Tibial artery (tissue), 4 donors: ENCODE measurements at regions of chr3 and their contacts with region 1.

Region 1: GRCh38 chr3:101809178-101810021 is 30.4 kb downstream of the NXPE3 start:
- DNase-seq: no peak
- H3K4me3 ChIP-seq: no peak overlapping the region
- H3K27ac ChIP-seq: peak overlapping the region in 1 of 2 donors; percentile 2
- H3K4me1 ChIP-seq: peaks cover 0 to 19% (median 8%) of the 10 kb centered on the region in 4 donors
- H3K27me3 ChIP-seq: no peaks in the 10 kb centered on the region
- CTCF ChIP-seq: peak; percentile 55 to 76

Region 2: DNA sequence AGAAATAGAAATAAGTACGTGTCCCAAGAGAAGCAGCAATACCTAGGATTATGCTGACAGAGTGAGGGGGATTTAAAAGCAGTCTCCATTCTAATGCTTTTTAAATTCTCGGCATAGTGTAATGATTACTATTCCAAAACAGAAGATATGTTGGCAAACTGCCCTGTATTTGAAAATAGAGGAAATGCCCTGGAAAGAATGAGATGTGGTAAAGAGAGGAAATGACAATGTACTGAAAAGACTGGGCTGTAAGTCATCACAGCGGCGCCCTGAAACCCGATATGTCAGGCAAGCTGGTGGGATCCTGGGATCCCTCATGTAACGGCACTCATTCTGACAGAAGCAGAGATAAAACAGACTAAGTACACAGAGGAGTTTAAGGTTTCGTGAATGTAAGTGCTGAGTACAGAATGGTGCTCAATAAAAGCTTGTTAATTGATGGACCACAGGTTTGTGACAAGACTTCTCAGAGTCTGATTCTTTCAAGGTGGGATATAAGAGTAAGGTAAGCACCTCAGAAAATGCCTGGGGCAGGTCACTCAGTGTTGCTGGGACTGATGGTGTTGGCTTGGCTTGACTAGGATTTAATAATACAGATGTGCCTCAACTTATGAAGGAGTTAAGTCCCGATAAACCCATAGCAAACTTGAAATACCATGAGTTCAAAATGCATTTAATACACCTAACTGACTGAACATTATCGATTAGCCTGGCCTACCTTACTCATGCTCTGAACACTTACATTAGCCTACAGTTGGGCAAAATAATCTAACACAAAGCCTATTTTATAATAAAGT is 131.3 kb after region 1 on chr3:
- intact Hi-C with region 1: loop called (anchors 5 kb)
- DNase-seq: peak in 1 of 2 donors; percentile 53
- H3K4me3 ChIP-seq: no peak overlapping the region
- H3K27ac ChIP-seq: no peak overlapping the region
- H3K4me1 ChIP-seq: peaks cover 0 to 47% (median 2%) of the 10 kb centered on the region in 4 donors
- H3K27me3 ChIP-seq: no peaks in the 10 kb centered on the region
- CTCF ChIP-seq: no peak

Region 3: DNA sequence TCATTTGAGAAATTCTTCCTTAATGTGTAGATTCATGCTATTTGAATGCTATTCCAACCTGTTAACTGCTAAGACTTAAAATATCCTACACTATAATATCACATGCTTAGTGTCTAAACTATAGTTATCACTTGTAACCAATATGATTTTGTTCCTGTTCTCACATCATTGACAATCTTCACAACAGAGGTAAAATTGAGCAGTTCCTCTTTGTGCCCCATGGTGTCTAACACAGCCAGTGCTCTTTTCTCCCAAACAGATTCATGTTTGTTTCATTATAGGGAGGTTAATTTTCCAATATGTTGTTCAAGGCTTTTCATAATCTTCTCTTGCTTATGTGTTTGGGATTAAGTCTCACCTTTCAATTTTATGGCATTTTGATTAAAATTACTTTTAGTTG is 1216.5 kb after region 1 on chr3:
- intact Hi-C with region 1: no loop called
- DNase-seq: no peak
- H3K4me3 ChIP-seq: no peak overlapping the region
- H3K27ac ChIP-seq: no peak overlapping the region
- H3K4me1 ChIP-seq: no peaks in the 10 kb centered on the region
- H3K27me3 ChIP-seq: no peaks in the 10 kb centered on the region
- CTCF ChIP-seq: no peak